Right ventricle myocardium superior (tissue), 1 donor: ENCODE measurements at regions of chr12 and their contacts with region 1.

Region 1: GRCh38 chr12:107685360-107686248 is at the start of gene PWP1:
- DNase-seq: peak; percentile 98
- ATAC-seq: peak; percentile 98
- total RNA-seq, gene PWP1: 9.4 TPM

Region 2: GRCh38 chr12:107748472-107748871 is 62.9 kb after region 1 on chr12:
- intact Hi-C with region 1: loop called (anchors 10 kb)
- DNase-seq: no peak
- ATAC-seq: peak; percentile 69

Region 3: GRCh38 chr12:108514973-108515814 is 829.6 kb after region 1 on chr12 and contains the start of gene FICD:
- intact Hi-C with region 1: loop called (anchors 10 kb)
- DNase-seq: peak; percentile 100
- ATAC-seq: peak; percentile 97
- total RNA-seq, gene FICD: 3.0 TPM